Body of pancreas (tissue), 4 donors: ENCODE measurements at regions of chr2 and their contacts with region 1.

Region 1: DNA sequence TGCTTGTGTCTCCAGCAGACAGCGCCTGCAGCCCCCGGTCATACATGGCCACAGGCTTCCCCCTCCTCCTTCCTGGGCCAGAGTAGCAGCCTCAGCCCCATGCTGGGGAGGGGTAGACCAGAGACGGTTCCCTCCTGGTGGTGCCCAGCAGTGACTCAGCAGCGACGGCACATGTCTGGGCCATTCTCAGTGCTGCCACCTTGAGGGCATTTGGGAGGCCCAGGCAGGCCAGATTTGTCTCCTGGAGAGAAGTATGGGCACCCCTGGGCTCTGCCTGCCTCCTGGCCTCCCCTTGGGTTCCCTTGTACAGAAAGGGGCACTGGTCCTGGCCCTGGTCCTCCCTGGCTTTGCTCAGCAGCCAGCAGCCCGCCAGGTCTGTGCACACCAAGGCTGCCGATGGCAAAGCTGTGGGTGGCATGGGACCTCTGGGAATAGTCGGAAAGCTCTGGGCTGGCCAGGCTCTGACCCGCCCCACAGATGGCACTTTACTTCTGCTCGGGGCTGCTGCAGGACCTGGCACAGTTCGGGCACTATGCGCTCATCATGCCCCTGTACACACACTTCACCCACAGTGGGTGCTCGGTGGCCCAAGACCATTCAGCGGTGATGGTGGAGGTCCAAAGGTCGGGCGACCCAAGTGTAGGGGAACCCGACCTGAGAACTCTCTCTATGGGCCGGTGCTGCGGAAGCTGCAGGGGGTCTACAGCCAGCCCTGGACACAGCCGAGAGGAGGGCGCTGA is 11.4 kb upstream of the ALPI start:
- DNase-seq: peak; percentile 56 to 62 (median 60)
- ATAC-seq: no peak
- H3K4me3 ChIP-seq: no peak overlapping the region
- H3K27ac ChIP-seq: no peak overlapping the region
- H3K4me1 ChIP-seq: peaks cover 13% of the 10 kb centered on the region
- H3K27me3 ChIP-seq: no peaks in the 10 kb centered on the region
- CTCF ChIP-seq: peak; percentile 22 to 48 (median 43)
- POLR2A ChIP-seq: no peak

Region 2: DNA sequence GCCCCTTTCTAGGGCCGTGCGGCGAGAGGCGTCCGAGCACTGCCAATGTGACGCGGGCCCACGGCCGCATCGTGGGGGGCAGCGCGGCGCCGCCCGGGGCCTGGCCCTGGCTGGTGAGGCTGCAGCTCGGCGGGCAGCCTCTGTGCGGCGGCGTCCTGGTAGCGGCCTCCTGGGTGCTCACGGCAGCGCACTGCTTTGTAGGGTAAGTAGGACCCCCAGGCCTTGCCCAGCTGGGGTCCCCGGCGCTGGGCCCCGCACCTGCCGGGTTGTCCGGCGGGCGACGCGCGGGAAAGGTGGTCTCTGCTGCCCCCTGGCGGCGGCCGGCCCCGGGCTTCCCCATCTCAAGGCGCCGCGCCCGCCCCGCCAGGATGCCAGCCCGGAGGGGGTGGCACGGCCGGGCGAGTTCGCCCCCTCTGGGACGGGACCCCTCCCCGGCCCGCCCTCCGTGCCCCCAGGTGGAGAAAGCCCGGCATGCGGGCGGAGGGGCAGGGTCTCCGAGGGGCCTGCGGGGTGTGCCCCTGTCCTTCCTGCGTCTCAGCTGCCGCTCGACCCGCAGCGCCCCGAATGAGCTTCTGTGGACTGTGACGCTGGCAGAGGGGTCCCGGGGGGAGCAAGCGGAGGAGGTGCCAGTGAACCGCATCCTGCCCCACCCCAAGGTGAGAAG is 77.5 kb after region 1 on chr2:
- intact Hi-C with region 1: loop called (anchors 5 kb)
- DNase-seq: peak; percentile 40 to 73 (median 64)
- ATAC-seq: peak; percentile 57
- H3K4me3 ChIP-seq: no peak overlapping the region
- H3K27ac ChIP-seq: no peak overlapping the region
- H3K4me1 ChIP-seq: peaks cover 31% of the 10 kb centered on the region
- H3K27me3 ChIP-seq: peaks cover 0 to 34% of the 10 kb centered on the region in 2 donors
- CTCF ChIP-seq: peak; percentile 45 to 97 (median 80)
- POLR2A ChIP-seq: no peak